Right lobe of liver (tissue), 6 donors: ENCODE measurements at regions of chr6 and their contacts with region 1.

Region 1: GRCh38 chr6:127520066-127520465 is 931 bp upstream of the MTCL3 start:
- DNase-seq: no peak
- ATAC-seq: no peak
- H3K4me3 ChIP-seq: no peak overlapping the region
- H3K27ac ChIP-seq: no peak overlapping the region
- H3K4me1 ChIP-seq: peaks cover 0 to 17% (median 0%) of the 10 kb centered on the region in 4 donors
- H3K27me3 ChIP-seq: peaks cover 8 to 23% of the 10 kb centered on the region in 2 donors
- CTCF ChIP-seq: no peak
- POLR2A ChIP-seq: no peak

Region 2: DNA sequence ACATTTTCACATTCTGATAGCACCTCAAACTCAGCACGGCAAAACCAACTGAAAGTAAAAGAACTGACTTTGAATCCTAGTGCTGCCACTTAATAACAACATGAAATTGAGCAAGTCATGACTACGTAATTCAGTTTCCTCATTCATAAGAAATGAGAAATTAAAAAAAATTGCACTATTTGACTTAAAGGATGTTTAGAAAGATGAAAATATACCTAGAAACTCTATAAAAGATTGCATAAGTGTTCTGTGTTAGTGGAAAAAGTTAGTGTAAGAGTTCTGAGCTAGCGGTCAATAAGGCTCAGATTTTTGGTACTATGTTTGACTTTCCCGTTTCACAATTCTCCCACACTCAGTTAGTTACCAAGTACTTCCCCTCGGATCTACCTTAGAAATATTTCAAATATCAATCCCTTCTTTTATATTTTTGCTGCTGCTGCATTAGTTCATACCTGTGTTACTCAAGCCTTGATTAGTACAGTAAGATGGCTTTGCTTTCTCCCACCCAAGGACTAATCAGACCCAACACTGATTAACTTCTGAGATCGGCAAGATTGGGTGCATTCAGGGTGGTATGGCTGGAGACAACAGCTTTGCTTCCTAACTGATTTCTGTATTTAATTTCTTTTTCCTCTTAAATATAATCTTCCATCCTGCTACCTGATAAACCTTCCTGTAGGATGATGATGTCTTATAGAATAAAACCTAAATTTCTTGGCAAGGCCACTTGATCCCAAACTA is 202.5 kb before region 1 on chr6:
- intact Hi-C with region 1: no loop called
- DNase-seq: no peak
- ATAC-seq: peak; percentile 80 to 90 (median 86)
- H3K4me3 ChIP-seq: no peak overlapping the region
- H3K27ac ChIP-seq: peak overlapping the region in 2 of 3 donors; percentile 0 to 16
- H3K4me1 ChIP-seq: no peaks in the 10 kb centered on the region
- H3K27me3 ChIP-seq: no peaks in the 10 kb centered on the region
- CTCF ChIP-seq: no peak
- POLR2A ChIP-seq: no peak

Region 3: GRCh38 chr6:127471379-127472255 is 48.4 kb before region 1 on chr6:
- intact Hi-C with region 1: loop called in 1 of 2 experiments (anchors 10 kb)
- DNase-seq: no peak
- ATAC-seq: peak; percentile 52 to 87 (median 63)
- H3K4me3 ChIP-seq: no peak overlapping the region
- H3K27ac ChIP-seq: no peak overlapping the region
- H3K4me1 ChIP-seq: peaks cover 0 to 4% (median 0%) of the 10 kb centered on the region in 4 donors
- H3K27me3 ChIP-seq: no peaks in the 10 kb centered on the region
- CTCF ChIP-seq: no peak
- POLR2A ChIP-seq: no peak

Region 4: GRCh38 chr6:127775371-127775770 is 255.3 kb after region 1 on chr6:
- intact Hi-C with region 1: no loop called
- DNase-seq: no peak
- ATAC-seq: no peak
- H3K4me3 ChIP-seq: no peak overlapping the region
- H3K27ac ChIP-seq: no peak overlapping the region
- H3K4me1 ChIP-seq: no peaks in the 10 kb centered on the region
- H3K27me3 ChIP-seq: no peaks in the 10 kb centered on the region
- CTCF ChIP-seq: no peak
- POLR2A ChIP-seq: no peak

Region 5: DNA sequence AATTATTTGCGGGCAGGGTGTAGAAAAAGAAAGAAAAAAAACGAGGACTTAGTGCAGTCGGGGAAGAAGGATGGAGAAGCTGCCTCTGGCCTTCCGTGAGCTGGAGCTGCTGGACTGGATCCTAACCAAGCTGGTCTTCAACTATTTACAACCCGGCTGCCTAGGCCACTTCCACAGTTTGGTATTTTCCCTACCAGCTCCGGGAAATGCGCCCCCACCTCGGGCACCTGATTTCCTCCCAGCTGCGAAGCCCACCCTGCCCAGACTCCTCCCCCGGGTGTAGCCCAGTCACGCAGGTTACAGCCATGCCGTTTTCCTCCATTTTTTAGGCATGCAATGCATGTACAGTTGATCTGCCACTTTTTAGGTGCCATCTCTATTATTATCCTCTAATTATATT is 359.6 kb after region 1 on chr6:
- intact Hi-C with region 1: no loop called
- DNase-seq: no peak
- ATAC-seq: no peak
- H3K4me3 ChIP-seq: no peak overlapping the region
- H3K27ac ChIP-seq: no peak overlapping the region
- H3K4me1 ChIP-seq: no peaks in the 10 kb centered on the region
- H3K27me3 ChIP-seq: no peaks in the 10 kb centered on the region
- CTCF ChIP-seq: no peak
- POLR2A ChIP-seq: no peak